Natural killer cell (primary cell): ENCODE measurements at regions of chr3 and their contacts with region 1.

Region 1: GRCh38 chr3:45656575-45657363 is 32.4 kb upstream of the SACM1L start:
- DNase-seq: peak; percentile 79 to 93
- ATAC-seq: peak; percentile 96 to 98 (median 96)
- H3K4me3 ChIP-seq: no peak overlapping the region
- H3K4me3 Mint-ChIP-seq: no peak overlapping the region
- H3K27ac ChIP-seq: no peak overlapping the region
- H3K27ac Mint-ChIP-seq: no peak overlapping the region
- H3K4me1 ChIP-seq: peaks cover 3% of the 10 kb centered on the region
- H3K4me1 Mint-ChIP-seq: peaks cover 19 to 22% of the 10 kb centered on the region in 2 donors
- H3K27me3 ChIP-seq: no peaks in the 10 kb centered on the region
- H3K27me3 Mint-ChIP-seq: no peaks in the 10 kb centered on the region
- CTCF ChIP-seq: peak; percentile 86

Region 2: GRCh38 chr3:45043728-45044299 is 613.0 kb before region 1 on chr3:
- intact Hi-C with region 1: loop called (anchors 2 kb)
- DNase-seq: no peak
- ATAC-seq: no peak
- H3K4me3 ChIP-seq: no peak overlapping the region
- H3K4me3 Mint-ChIP-seq: no peak overlapping the region
- H3K27ac ChIP-seq: no peak overlapping the region
- H3K27ac Mint-ChIP-seq: no peak overlapping the region
- H3K4me1 ChIP-seq: peaks cover 12% of the 10 kb centered on the region
- H3K4me1 Mint-ChIP-seq: peaks cover 12 to 14% of the 10 kb centered on the region in 2 donors
- H3K27me3 ChIP-seq: peaks cover 2% of the 10 kb centered on the region
- H3K27me3 Mint-ChIP-seq: peaks cover 10 to 18% of the 10 kb centered on the region in 2 donors
- CTCF ChIP-seq: no peak

Region 3: DNA sequence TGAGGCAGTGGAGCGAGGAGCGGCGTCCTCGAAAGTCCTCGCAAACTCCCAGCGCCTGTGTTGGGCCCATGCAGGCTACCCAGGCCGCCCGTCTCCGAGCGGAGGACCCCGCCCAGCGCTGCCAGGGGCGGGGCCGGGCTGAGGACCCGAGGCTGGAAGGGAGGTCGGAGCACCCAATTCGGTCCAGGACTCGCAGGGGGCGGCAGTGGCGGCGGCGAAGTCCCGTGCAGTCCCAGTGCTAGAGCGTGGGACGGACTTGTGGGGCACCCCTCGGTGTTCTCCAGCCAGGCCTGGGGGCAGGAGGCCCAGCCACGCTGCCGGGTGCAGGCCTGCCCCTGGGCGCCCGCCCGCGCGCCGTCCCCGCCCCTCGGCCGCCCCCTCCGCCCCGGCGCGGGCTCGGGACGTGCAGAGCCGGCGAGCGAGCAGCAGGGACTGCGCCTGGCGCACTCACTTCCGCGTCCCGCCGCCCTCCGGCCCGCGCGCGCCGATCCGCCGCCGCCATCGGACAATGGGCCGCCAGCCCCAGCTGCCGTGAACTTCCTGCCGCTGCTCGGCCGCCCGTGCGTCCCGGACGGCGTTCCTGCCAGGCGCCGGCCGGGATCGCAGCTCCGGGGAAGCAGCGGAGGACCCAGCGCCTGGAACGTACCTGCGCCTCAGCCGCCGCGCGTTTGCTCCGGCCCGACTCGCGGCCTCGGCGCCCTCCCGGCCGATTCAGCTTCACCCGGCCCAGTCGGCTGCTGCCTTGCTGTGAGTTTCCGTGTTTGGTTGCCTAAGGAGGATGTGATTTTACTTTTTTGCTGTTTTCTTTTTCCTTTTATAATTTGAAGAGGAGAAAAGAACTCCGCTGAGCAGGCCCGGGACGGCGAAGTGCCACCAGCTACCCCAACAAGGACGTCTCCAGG is 62.8 kb before region 1 on chr3:
- intact Hi-C with region 1: loop called (anchors 5 kb)
- DNase-seq: peak; percentile 69 to 81
- ATAC-seq: peak; percentile 85 to 90 (median 88)
- H3K4me3 ChIP-seq: peak overlapping the region; percentile 64
- H3K4me3 Mint-ChIP-seq: peak overlapping the region; percentile 92
- H3K27ac ChIP-seq: peak overlapping the region; percentile 37
- H3K27ac Mint-ChIP-seq: peak overlapping the region; percentile 81 to 90
- H3K4me1 ChIP-seq: peaks cover 58% of the 10 kb centered on the region
- H3K4me1 Mint-ChIP-seq: peaks cover 51 to 61% of the 10 kb centered on the region in 2 donors
- H3K27me3 ChIP-seq: no peaks in the 10 kb centered on the region
- H3K27me3 Mint-ChIP-seq: no peaks in the 10 kb centered on the region
- CTCF ChIP-seq: no peak